ENCODE measurements at regions of chr6 and their contacts with region 1.

Region 1: DNA sequence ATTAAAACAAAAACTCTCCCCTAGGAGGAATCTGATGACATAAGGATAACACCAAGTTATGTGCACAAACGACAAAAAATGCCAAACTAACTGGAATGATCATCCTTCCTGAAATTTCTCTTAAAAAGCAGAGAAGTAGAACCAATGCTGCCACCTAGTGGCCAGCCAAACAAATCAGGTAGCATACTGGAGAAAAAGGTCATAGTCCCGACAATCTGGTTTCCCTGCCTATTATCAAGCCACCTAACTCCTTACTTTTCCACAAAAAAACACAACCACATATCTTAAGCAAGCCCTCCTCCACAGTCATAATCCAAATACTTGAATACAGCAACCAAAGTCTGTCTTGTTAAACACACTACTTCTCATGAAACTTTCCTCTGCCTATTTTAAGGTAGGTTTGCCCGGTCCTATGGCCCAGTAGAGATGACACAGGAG is 5.3 kb downstream of the OARD1 start:
- DNase-seq: no peak
- ATAC-seq: no peak

Region 2: GRCh38 chr6:40520678-40521077 is 546.2 kb before region 1 on chr6:
- intact Hi-C with region 1: no loop called
- DNase-seq: no peak
- ATAC-seq: peak; percentile 78

Region 3: GRCh38 chr6:40999569-40999968 is 67.3 kb before region 1 on chr6:
- intact Hi-C with region 1: loop called (anchors 5 kb)
- DNase-seq: peak; percentile 68
- ATAC-seq: peak; percentile 75

Region 4: GRCh38 chr6:41008011-41008410 is 58.9 kb before region 1 on chr6:
- intact Hi-C with region 1: loop called (anchors 5 kb)
- DNase-seq: no peak
- ATAC-seq: no peak

Region 5: GRCh38 chr6:41027799-41028628 is 38.9 kb before region 1 on chr6:
- intact Hi-C with region 1: loop called (anchors 2 kb)
- DNase-seq: peak; percentile 94
- ATAC-seq: peak; percentile 93

Region 6: DNA sequence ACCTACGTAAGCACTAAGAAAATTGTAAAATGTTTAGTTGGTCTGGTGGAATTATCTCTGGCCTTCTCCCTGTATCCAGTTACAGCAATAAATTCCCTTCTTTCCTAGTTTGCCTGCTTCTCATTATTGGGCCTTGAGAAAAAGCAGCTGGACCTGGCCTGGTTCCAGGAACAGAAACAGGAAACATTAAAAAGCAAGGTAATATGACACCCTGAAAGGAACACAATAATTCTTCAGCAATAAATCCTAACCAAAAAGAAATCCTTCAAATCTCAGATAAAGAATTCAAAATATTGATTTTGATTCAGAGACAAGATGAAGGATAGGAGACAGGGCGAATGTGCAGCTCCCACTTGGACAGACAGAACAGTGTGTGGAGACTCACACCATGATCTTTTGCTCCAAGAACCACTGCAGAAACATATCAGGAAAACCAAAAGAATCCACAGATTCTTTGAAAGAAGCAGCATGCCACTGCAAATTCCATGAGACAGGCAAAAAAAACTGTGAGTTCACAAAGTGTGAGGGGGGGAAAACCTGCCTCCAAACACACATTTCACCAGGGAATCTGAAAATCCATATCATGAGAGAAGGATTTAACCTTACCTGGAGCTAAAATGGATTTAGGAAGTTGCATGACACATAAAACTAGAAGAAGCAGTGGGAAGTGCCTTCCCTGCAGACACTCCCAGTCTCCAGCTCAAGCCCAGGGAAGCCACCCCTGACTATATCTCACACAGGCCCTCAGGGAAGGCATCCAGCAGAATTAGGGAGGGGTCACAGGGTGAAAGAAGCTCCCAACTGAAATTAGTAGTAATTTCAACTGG is 190.7 kb after region 1 on chr6:
- intact Hi-C with region 1: no loop called
- DNase-seq: no peak
- ATAC-seq: no peak

Measured in Right ventricle myocardium inferior (tissue), 1 donor.